HEK293T (cell line): ENCODE measurements at regions of chr1 and their contacts with region 1.

Region 1: GRCh38 chr1:233140974-233141373 is 154.6 kb downstream of the PCNX2 start:
- DNase-seq: no peak

Region 2: DNA sequence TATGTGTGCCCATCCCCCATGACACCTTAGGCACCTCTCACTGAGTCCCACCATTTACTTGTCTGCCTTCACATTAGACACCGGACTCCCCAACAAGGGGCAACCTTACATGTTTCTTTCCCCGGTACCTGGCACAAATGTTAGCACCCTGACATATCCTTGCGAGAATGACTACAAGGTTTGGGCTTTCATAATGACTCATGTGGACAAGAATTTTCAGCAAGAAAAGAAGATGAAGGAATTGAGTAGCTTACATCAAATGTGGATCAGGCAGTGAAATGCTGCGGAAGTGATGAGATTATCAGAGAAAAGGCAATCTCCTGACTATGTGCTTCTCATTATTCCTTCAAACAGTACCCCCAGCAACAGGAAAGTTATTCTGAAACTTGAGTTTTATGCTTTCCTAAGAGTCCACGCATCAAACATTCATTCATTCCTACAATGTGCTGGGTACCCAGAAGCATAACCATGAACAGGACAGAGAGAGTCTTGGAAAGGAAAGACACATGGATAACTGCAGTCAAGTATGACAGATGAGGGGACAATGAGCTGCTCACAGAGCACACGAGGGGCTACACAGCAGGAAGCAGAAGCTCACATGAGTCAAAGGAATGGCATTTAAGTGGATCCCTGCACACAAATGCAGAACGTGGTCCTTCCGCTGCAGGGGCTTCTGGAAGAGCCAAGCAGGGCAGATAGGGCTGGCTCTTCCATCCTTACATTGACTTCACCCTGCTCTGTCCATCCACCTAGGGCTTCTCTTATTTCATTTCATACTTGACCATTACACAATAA is 42.4 kb after region 1 on chr1:
- CTCF ChIA-PET with region 1: no interaction called
- POLR2A ChIA-PET with region 1: no interaction called
- DNase-seq: no peak

Region 3: GRCh38 chr1:233227930-233228465 is 87.0 kb after region 1 on chr1:
- CTCF ChIA-PET with region 1: interaction called, 11 read pairs
- POLR2A ChIA-PET with region 1: no interaction called
- DNase-seq: no peak